Mammary epithelial cell (primary cell): ENCODE measurements at regions of chr20 and their contacts with region 1.

Region 1: DNA sequence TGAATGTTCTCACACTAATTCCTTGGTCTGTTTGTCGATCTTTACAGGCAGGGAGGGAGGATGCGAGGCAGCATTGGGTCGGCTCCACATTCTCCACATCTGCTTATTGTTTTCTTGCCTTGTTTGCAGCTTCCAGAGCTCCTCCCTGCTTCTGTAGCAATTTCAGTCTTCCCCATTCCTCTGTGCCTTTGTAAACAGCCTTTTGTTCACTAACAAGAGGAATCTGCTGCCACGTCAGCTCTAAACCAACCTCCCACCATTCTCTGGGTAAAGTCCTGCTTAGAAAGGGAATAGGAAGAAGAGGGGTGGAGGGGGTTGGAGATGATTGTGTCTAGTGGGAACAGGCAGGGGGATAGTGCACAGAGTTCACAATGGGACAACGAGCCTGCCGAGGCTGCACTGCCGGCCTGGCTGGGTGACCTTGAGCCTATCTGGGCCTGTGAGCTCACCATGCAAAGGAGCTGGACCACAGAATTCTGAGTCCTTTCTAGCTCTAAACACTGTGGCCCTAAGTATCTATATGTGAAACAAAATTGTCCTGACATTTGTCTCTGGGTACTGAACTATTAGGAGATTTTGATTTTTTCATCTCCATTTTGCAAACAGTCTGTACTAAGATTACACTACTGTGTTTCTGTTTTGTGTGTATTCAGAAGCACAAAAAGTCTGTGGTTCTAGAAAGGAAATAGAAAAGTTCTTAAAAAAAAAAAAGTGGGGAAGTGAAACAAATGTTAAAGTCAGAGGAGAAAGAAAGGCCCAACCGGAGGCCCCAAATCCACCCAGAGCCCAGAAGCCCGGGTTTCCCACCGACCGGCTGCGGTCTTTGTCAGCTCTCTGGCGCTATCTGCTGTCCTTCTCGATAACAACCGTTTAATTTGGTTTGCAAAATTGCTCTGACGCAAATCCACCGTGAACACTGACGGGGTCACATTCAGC is 1.4 kb upstream of the PRND start:
- DNase-seq: peak; percentile 46
- H3K4me3 ChIP-seq: no peak overlapping the region
- H3K27ac ChIP-seq: no peak overlapping the region
- H3K4me1 ChIP-seq: peaks cover 6% of the 10 kb centered on the region
- H3K27me3 ChIP-seq: no peaks in the 10 kb centered on the region
- CTCF ChIP-seq: peak; percentile 67 to 78

Region 2: GRCh38 chr20:4261333-4262217 is 458.7 kb before region 1 on chr20:
- CTCF ChIA-PET with region 1: no interaction called
- dilution Hi-C with region 1: no loop called
- in situ Hi-C with region 1: loop called in 1 of 2 experiments (anchors 10 kb)
- intact Hi-C with region 1: no loop called
- DNase-seq: peak; percentile 49
- H3K4me3 ChIP-seq: no peak overlapping the region
- H3K27ac ChIP-seq: no peak overlapping the region
- H3K4me1 ChIP-seq: no peaks in the 10 kb centered on the region
- H3K27me3 ChIP-seq: no peaks in the 10 kb centered on the region
- CTCF ChIP-seq: peak in 1 of 2 donors; percentile 44

Region 3: DNA sequence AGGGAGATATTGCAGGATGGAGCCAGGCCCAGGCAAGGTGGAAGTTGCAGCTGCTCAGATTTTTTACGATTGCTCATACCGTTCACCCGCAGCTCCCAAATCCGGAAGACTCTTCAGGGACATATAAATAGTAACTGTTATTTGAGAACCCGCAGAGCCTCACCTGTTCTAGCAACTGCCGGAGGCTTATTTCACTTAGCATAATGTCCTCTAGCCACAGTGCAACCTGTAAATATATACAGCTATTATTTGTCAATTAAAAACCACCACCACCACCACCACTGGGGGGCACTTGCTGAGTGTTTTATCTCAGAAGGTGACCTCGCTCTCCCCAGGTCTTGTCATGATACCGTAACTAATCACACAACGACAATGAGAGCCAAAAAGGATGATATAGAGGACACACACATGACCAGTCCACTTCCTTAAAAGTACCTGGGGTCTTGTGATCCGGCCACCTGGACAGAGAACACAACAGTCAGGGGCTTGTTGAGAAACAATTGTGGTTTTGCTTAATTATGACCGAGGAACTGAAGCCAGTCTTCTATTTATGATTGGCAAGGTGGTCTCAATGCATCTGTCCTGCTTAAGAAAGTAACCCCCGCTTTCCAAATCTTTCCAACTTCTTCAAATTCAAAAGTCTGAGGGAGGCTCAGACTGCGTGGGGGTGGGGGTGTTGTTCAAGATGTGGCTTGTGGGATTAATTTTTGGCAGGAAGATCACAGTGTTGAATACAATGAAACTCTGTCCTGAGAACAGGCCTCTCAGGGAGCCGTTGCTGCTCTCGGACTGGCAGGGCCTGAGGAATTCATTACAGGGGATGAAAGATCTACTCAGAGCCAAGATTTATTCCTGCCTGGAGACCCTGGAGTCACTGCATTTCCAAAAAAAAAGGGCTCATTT is 106.3 kb before region 1 on chr20:
- CTCF ChIA-PET with region 1: interaction called, 4 read pairs
- dilution Hi-C with region 1: no loop called
- in situ Hi-C with region 1: loop called (anchors 5 kb)
- intact Hi-C with region 1: loop called (anchors 1 kb)
- DNase-seq: peak; percentile 85
- H3K4me3 ChIP-seq: no peak overlapping the region
- H3K27ac ChIP-seq: peak overlapping the region; percentile 81
- H3K4me1 ChIP-seq: peaks cover 19% of the 10 kb centered on the region
- H3K27me3 ChIP-seq: no peaks in the 10 kb centered on the region
- CTCF ChIP-seq: peak; percentile 56 to 72

Region 4: GRCh38 chr20:4666001-4666479 is 54.3 kb before region 1 on chr20:
- CTCF ChIA-PET with region 1: interaction called, 3 read pairs
- dilution Hi-C with region 1: no loop called
- in situ Hi-C with region 1: no loop called
- intact Hi-C with region 1: loop called (anchors 2 kb)
- DNase-seq: peak; percentile 95
- H3K4me3 ChIP-seq: peak overlapping the region; percentile 1 to 16 (median 12)
- H3K27ac ChIP-seq: peak overlapping the region; percentile 98
- H3K4me1 ChIP-seq: peaks cover 32% of the 10 kb centered on the region
- H3K27me3 ChIP-seq: no peaks in the 10 kb centered on the region
- CTCF ChIP-seq: no peak